Breast epithelium (tissue), 4 donors: ENCODE measurements at regions of chr2 and their contacts with region 1.

Region 1: GRCh38 chr2:241637000-241637791 is at the starts of genes ATG4B and THAP4:
- DNase-seq: peak; percentile 72 to 79
- H3K4me3 ChIP-seq: peak within 1 kb of the TSS; percentile 78 to 97 (median 92)
- H3K27ac ChIP-seq: peak within 1 kb of the TSS; percentile 99 to 100
- H3K4me1 ChIP-seq: peaks cover 8 to 23% of the 10 kb centered on the region in 2 donors
- H3K27me3 ChIP-seq: no peaks in the 10 kb centered on the region
- CTCF ChIP-seq: no peak
- POLR2A ChIP-seq: peak; percentile 45
- total RNA-seq, gene ATG4B: 47.7 to 71.1 (median 64.2) TPM
- total RNA-seq, gene THAP4: 35.3 to 45.9 (median 38.1) TPM

Region 2: DNA sequence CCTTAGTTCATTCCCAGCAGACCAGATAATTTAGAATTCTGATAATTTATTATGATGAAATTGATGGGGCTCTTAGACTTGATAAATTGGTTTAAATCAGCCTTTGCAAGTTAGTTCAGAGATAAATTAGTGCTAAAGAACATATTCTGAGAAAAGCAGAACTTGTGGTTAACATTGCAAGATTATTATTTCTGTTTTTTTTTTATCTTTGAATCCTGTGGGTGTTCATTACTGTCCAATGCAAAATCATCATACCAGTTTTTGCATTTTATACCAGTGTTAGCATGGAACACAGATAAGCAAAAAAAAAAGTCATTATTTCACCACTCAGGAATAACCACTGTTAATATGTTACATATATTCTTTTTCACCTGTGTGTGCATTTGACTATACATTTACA is 312.4 kb before region 1 on chr2:
- intact Hi-C with region 1: no loop called
- DNase-seq: no peak
- H3K4me3 ChIP-seq: no peak overlapping the region
- H3K27ac ChIP-seq: no peak overlapping the region
- H3K4me1 ChIP-seq: no peaks in the 10 kb centered on the region
- H3K27me3 ChIP-seq: no peaks in the 10 kb centered on the region
- CTCF ChIP-seq: no peak
- POLR2A ChIP-seq: no peak

Region 3: DNA sequence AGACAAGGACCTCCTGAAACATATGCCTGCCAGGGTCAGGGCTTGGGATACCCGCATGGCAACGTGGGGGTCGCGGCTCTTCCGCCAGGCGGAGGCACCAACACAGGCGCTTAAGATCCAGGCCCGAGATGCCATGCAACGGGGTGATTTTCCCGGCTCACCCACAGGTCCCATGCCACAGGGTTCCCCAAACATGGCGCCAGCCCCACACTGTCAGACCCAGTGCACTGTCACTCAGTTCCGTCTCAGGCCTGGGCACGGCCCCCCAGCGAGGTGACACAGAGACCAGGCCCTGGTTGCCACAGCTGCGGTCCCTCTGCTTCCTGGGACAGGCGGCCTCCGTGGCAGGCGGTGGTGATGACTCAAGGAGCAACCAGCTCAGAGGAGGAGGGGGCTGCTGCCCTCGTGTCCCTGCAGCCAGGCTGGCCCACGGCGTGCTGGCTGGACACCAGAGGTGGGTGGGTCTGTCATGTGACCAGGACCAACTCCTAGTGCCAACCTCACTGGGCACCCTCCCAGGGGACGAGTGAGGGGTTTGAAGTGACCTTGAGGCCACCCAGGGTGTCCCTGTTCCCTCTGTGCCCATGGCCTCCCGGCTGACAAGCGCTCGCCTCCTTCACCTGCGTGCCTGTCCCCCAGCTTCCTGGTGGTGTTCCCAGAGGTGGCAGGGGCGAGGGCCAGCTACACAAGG is 216.6 kb after region 1 on chr2:
- intact Hi-C with region 1: loop called (anchors 5 kb)
- DNase-seq: peak in 1 of 2 donors; percentile 48
- H3K4me3 ChIP-seq: no peak overlapping the region
- H3K27ac ChIP-seq: no peak overlapping the region
- H3K4me1 ChIP-seq: no peaks in the 10 kb centered on the region
- H3K27me3 ChIP-seq: peaks cover 0 to 8% of the 10 kb centered on the region in 2 donors
- CTCF ChIP-seq: no peak
- POLR2A ChIP-seq: no peak